Prostate gland (tissue), 2 donors: ENCODE measurements at regions of chr17 and their contacts with region 1.

Region 1: GRCh38 chr17:42459256-42459800 is 650 bp downstream of the ATP6V0A1 start:
- DNase-seq: peak; percentile 53
- H3K4me3 ChIP-seq: peak overlapping the region; percentile 57 to 61
- H3K27ac ChIP-seq: peak overlapping the region; percentile 94 to 98
- H3K4me1 ChIP-seq: no peaks in the 10 kb centered on the region
- H3K27me3 ChIP-seq: no peaks in the 10 kb centered on the region
- CTCF ChIP-seq: peak in 2 of 4 experiments; percentile 21 to 49
- POLR2A ChIP-seq: no peak

Region 2: DNA sequence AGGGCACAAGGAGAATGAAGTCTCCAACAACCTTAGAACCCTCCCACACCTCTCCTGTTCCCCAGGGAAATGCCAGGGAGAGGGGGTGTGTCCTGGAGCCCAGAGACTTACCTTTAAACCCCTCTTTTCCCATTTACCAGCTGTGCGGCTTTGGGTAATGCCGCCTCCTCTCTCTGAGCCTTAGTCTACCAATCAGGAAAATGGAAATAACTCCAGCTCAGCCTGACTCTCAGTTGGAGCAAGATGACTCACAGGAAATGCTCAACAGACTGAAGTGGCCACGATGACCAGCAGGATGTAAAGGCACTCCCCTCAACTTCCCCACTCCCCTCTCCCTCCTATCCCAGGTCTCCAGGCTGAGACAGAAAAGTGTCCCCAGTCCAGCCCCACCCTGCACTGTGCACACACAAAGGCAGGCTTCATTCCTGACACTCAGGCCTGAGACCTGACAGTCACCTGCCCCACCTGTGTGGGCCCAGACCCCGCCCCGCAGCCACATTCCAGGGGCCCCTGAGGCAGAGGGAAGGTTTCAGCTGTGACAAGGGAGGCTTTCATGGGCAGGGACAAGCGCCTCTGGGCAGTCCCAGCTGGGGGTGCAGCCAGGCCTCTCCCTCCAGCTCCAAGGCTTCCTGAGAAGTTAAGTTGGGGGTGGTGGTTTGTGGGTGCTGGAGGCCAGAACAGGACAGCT is 937.6 kb before region 1 on chr17:
- intact Hi-C with region 1: no loop called
- DNase-seq: no peak
- H3K4me3 ChIP-seq: no peak overlapping the region
- H3K27ac ChIP-seq: peak overlapping the region; percentile 3 to 24
- H3K4me1 ChIP-seq: peaks cover 8% of the 10 kb centered on the region
- H3K27me3 ChIP-seq: no peaks in the 10 kb centered on the region
- CTCF ChIP-seq: no peak
- POLR2A ChIP-seq: no peak

Region 3: DNA sequence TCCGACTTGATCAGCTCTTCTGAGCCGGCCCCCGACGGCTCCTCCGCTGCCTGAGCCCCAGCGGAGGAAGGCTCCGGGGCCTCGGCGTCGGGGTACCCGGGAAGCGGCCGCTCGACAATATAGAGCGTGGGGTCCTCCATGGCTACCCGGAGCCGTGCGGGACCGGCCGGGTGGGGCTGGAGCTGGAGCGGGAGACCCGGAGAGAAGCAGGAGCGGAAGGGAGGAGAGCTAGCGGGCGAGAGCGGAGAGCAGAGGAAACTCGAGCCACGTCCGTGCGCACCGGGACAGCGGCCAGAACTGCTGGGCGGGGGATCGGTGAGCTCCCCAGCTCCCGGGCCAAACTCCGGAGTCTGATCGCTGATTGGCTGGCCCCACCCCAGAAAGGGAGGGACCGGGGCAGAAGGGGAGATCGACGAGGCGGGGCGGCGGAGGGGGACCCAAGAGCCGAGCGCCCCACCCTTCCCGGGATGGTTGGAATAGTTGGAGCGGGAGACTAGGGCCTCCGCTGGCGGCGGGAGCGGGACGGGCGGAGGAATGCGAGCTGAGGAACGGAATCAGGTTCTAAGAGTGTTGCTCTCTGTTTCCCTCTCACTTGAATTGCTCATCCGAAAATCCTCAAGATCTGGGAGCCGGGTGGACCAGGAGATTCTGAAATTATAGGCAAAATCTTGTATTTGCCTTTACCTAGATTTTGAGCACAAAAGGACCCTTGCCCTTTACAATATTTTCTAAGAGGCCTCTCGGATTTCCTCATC is 36.2 kb before region 1 on chr17 and contains the start of gene CAVIN1:
- intact Hi-C with region 1: loop called (anchors 5 kb)
- DNase-seq: peak; percentile 99
- H3K4me3 ChIP-seq: peak within 1 kb of the TSS; percentile 93 to 96
- H3K27ac ChIP-seq: peak within 1 kb of the TSS; percentile 93 to 95
- H3K4me1 ChIP-seq: no peaks in the 10 kb centered on the region
- H3K27me3 ChIP-seq: no peaks in the 10 kb centered on the region
- CTCF ChIP-seq: peak in 1 of 4 experiments; percentile 16
- POLR2A ChIP-seq: peak; percentile 84
- total RNA-seq, gene CAVIN1: 214 to 220 TPM

Region 4: GRCh38 chr17:42508426-42509165 is 49.3 kb after region 1 on chr17:
- intact Hi-C with region 1: loop called (anchors 5 kb)
- DNase-seq: no peak
- H3K4me3 ChIP-seq: no peak overlapping the region
- H3K27ac ChIP-seq: peak overlapping the region; percentile 72 to 75
- H3K4me1 ChIP-seq: peaks cover 8% of the 10 kb centered on the region
- H3K27me3 ChIP-seq: no peaks in the 10 kb centered on the region
- CTCF ChIP-seq: no peak
- POLR2A ChIP-seq: no peak

Region 5: DNA sequence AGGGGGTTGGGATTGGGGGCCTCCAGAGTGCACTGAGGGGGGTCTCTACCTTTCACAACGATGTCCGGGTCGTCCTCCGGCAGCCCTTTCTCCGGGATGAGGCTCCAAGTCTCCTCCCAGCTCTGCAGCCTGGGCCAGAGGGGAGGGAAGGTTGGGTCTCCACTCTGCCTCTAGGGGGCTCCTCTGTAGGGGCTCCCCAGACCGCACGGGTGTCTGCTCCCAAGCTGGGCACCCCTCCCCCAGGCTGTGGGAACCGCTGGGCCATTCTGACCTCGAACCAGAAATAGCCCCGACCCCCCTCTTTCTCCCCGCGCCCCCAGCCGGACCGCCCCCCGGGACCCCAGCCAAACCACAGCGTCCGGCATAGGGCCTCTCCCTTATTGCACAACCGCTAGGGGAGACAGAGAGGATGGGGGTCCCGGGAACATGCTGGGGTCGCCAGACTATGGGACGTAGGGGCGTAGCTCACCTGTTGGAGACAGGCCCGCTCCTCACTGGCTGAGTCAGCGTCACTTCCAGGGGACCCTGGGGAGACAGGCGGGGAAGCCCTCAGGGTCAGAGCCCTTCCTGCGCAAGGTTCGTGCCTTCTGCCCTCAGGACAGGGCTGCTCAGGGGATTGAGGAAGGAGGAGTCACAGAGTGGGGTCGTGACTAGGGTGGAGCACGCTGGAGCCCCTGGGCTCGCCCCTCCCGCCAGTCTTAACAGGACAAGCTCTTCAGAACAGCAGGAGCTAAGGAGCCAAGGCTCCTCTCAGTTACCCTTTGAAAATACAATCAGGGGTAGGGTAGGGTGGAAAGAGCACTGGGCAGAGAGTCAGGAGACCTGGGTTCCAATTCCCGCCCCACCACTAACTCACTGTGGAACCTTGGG is 214.8 kb after region 1 on chr17:
- intact Hi-C with region 1: no loop called
- DNase-seq: peak; percentile 19
- H3K4me3 ChIP-seq: peak overlapping the region; percentile 17 to 66
- H3K27ac ChIP-seq: peak overlapping the region; percentile 85 to 98
- H3K4me1 ChIP-seq: peaks cover 9% of the 10 kb centered on the region
- H3K27me3 ChIP-seq: no peaks in the 10 kb centered on the region
- CTCF ChIP-seq: peak in 2 of 4 experiments; percentile 29 to 34
- POLR2A ChIP-seq: no peak

Region 6: GRCh38 chr17:42698736-42699414 is 239.5 kb after region 1 on chr17:
- intact Hi-C with region 1: no loop called
- DNase-seq: no peak
- H3K4me3 ChIP-seq: no peak overlapping the region
- H3K27ac ChIP-seq: no peak overlapping the region
- H3K4me1 ChIP-seq: no peaks in the 10 kb centered on the region
- H3K27me3 ChIP-seq: no peaks in the 10 kb centered on the region
- CTCF ChIP-seq: no peak
- POLR2A ChIP-seq: no peak